GM12878 (cell line): ENCODE measurements at regions of chr17 and their contacts with region 1.

Region 1: GRCh38 chr17:78013683-78014467 is 55.4 kb downstream of the TNRC6C start:
- DNase-seq: peak; percentile 20
- ATAC-seq: peak; percentile 74
- H3K4me3 ChIP-seq: no peak overlapping the region
- H3K27ac ChIP-seq: no peak overlapping the region
- H3K4me1 ChIP-seq: no peaks in the 10 kb centered on the region
- H3K27me3 ChIP-seq: no peaks in the 10 kb centered on the region
- CTCF ChIP-seq: peak; percentile 67 to 89 (median 79)
- EP300 ChIP-seq: no peak
- POLR2A ChIP-seq: no peak
- RAD21 ChIP-seq: peak; percentile 94

Region 2: DNA sequence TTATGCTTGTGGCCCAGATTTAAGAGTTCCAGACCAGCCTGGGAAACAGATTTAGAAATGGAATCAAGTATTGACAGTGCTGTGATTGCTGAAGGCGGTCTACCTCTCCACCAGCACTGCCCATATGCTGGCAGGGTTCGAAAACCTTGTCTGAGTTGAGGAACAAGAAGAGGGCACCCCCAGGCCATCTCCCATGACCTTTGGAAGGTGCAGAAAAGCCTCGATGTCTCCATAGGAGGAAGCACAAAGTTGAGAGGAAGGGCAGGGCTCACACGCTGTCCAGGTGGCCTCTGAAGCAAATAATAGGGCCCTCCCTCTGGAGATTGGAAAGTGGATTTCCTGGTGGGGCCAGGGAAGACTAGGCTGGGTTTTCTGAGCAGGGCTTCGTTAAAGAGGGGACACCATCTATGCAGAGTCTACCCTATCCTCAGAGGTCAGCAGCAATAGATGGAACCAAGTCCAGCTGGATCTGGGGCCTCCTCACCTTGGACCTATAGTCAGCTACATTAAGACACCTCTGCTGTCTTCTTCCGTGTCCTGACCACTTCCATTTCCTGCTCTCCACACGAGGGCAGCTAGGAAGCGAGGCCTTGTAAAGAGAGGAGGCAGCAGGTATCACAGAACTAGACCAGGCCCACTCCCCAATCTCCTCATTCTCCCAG is 1355.7 kb before region 1 on chr17:
- CTCF ChIA-PET with region 1: no interaction called
- POLR2A ChIA-PET with region 1: no interaction called
- RAD21 ChIA-PET with region 1: no interaction called
- SMC1A ChIA-PET with region 1: no interaction called
- in situ Hi-C with region 1: no loop called
- intact Hi-C with region 1: no loop called
- DNase-seq: no peak
- ATAC-seq: no peak
- H3K4me3 ChIP-seq: no peak overlapping the region
- H3K27ac ChIP-seq: no peak overlapping the region
- H3K4me1 ChIP-seq: peaks cover 3% of the 10 kb centered on the region; the same call in 1 of the 2 replicates
- H3K27me3 ChIP-seq: no peaks in the 10 kb centered on the region
- CTCF ChIP-seq: no peak
- EP300 ChIP-seq: no peak
- POLR2A ChIP-seq: no peak
- RAD21 ChIP-seq: no peak

Region 3: DNA sequence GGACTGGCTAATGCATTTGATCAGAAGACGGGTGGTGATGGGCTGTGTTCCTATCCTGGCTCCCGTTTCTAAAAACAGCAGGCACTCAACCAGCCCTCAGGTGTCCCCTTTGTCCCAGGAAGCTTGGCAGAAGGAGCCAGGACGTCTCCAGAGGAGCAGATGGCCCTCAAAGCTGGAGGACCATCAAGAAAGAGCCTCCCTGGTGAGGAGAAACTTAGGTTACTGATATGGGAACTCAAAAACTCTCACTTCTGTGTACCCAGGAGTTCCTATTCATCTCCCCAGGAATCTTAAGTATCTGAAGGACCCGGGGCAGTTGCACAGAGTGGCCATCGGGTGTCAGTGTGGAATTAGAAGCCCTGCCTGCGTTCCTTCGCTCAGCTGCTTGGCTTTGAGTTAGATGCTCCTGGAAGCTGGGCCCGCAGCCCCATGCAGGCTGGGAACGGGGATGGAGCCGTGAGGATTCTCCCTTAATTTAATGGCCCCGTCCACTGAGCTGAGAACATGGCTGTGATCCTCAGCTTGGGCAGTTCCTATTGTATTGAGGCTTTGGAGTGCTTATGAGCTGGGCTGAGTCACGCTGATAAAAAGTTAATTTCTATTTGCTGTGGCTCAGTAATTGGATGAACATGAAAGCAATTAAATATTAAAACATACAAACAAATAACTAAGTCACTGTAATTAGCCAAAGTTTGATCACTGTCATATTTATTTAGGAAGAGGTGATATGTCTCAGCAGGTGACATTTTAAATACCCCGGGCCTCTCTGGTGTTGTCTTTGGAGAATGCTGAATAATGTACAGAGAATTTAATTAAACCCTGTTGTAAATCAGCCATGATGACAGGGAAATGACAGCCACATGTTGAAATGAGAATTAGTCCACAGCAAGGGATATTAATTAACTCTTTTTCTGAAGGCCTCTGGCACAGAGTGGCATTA is 471.1 kb before region 1 on chr17:
- CTCF ChIA-PET with region 1: interaction called, 58 read pairs
- POLR2A ChIA-PET with region 1: no interaction called
- RAD21 ChIA-PET with region 1: interaction called, 41 read pairs
- SMC1A ChIA-PET with region 1: interaction called, 26 read pairs
- in situ Hi-C with region 1: loop called (anchors 5 kb)
- intact Hi-C with region 1: loop called (anchors 1 kb)
- DNase-seq: peak; percentile 5
- ATAC-seq: peak; percentile 91
- H3K4me3 ChIP-seq: no peak overlapping the region
- H3K27ac ChIP-seq: no peak overlapping the region
- H3K4me1 ChIP-seq: no peaks in the 10 kb centered on the region
- H3K27me3 ChIP-seq: peaks cover 0 to 1% of the 10 kb centered on the region in 2 experiments; a peak in 2 of 4 replicates
- CTCF ChIP-seq: peak; percentile 84 to 88 (median 86)
- EP300 ChIP-seq: no peak
- POLR2A ChIP-seq: no peak
- RAD21 ChIP-seq: peak; percentile 84

Region 4: GRCh38 chr17:77563439-77564102 is 450.3 kb before region 1 on chr17:
- CTCF ChIA-PET with region 1: no interaction called
- POLR2A ChIA-PET with region 1: no interaction called
- RAD21 ChIA-PET with region 1: no interaction called
- SMC1A ChIA-PET with region 1: no interaction called
- in situ Hi-C with region 1: no loop called
- intact Hi-C with region 1: no loop called
- DNase-seq: no peak
- ATAC-seq: no peak
- H3K4me3 ChIP-seq: no peak overlapping the region
- H3K27ac ChIP-seq: no peak overlapping the region
- H3K4me1 ChIP-seq: no peaks in the 10 kb centered on the region
- H3K27me3 ChIP-seq: peaks cover 0 to 7% of the 10 kb centered on the region in 2 experiments; a peak in 2 of 4 replicates
- CTCF ChIP-seq: no peak
- EP300 ChIP-seq: no peak
- POLR2A ChIP-seq: no peak
- RAD21 ChIP-seq: no peak

Region 5: DNA sequence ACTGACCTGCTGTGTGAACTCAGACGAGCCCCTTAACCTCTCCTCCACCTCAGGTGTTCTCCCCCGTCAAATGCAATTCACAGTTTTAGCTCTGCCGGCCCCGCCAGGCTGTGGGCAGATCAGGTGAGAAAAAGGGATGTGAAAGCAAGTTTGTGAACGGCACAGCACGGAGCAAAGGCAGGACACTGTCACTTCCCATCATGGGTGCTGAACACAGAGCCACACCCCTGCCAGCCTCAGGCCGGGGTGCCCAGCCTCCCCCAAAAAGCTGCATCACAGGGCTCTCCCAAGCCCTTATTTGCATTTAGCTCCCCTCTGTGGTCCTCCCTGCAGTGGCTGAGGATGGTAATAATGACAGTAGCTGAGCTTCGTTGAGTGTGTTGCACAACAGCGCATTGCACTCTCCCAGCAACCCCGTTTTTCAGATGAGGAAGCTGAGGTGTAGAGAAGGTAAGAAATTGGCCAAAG is 144.2 kb before region 1 on chr17:
- CTCF ChIA-PET with region 1: interaction called, 12 read pairs
- POLR2A ChIA-PET with region 1: no interaction called
- RAD21 ChIA-PET with region 1: interaction called, 6 read pairs
- SMC1A ChIA-PET with region 1: interaction called, 8 read pairs
- in situ Hi-C with region 1: no loop called
- intact Hi-C with region 1: no loop called
- DNase-seq: peak; percentile 87
- ATAC-seq: peak; percentile 97
- H3K4me3 ChIP-seq: no peak overlapping the region
- H3K27ac ChIP-seq: no peak overlapping the region
- H3K4me1 ChIP-seq: peaks cover 22% of the 10 kb centered on the region
- H3K27me3 ChIP-seq: peaks cover 0 to 4% of the 10 kb centered on the region in 2 experiments; a peak in 1 of 4 replicates
- CTCF ChIP-seq: peak in 1 of 3 experiments; percentile 13; a peak in 1 of 6 replicates
- EP300 ChIP-seq: peak; percentile 86 to 91; a peak in 3 of 4 replicates
- POLR2A ChIP-seq: no peak
- RAD21 ChIP-seq: no peak

Region 6: DNA sequence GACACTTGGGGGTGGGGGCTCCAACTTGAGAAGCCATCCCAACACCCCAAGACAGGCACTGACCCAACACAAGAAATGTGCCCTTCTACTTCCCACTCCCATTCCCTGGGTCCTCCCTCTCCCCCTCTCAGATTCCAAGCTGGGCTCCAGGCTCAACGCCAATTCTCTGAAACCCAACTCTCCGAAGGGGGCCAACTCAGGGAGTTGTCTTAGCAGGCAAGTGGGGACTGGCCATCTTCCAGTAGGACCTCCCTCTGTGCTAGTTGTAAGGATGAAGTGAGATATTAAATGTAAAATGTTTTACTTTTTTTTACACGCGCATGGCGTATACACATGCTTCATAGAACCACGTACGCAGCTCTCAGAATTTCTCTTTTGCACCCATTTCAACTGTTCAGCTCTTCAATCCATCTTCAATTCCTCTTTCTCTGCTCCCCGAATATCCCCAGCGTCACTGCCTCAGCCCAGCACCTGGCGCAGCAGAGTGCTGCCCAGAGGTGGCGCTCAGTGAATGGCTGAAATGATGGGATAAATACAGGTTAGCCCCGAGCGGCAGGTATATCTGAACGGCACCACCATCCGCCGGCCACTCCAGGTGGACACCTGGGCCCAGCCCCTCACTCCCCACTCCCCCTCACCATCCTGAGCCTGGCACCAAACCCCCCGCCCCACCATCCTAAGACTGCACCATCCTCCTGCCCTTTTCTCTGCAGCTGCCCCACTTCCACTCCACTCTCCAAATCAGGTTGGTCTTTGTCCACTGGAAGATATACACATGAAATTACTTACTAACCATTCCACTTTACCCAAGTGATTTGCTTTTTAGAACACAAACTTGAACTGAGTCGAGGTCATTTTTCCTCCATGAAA is 99.3 kb before region 1 on chr17:
- CTCF ChIA-PET with region 1: interaction called, 20 read pairs
- POLR2A ChIA-PET with region 1: no interaction called
- RAD21 ChIA-PET with region 1: no interaction called
- SMC1A ChIA-PET with region 1: interaction called, 4 read pairs
- in situ Hi-C with region 1: no loop called
- intact Hi-C with region 1: no loop called
- DNase-seq: no peak
- ATAC-seq: peak; percentile 31; the same call in 1 of the 3 replicates
- H3K4me3 ChIP-seq: no peak overlapping the region
- H3K27ac ChIP-seq: no peak overlapping the region
- H3K4me1 ChIP-seq: no peaks in the 10 kb centered on the region
- H3K27me3 ChIP-seq: peaks cover 0 to 2% of the 10 kb centered on the region in 2 experiments; a peak in 2 of 4 replicates
- CTCF ChIP-seq: peak in 1 of 3 experiments; percentile 30; a peak in 1 of 6 replicates
- EP300 ChIP-seq: no peak
- POLR2A ChIP-seq: no peak
- RAD21 ChIP-seq: no peak

Region 7: DNA sequence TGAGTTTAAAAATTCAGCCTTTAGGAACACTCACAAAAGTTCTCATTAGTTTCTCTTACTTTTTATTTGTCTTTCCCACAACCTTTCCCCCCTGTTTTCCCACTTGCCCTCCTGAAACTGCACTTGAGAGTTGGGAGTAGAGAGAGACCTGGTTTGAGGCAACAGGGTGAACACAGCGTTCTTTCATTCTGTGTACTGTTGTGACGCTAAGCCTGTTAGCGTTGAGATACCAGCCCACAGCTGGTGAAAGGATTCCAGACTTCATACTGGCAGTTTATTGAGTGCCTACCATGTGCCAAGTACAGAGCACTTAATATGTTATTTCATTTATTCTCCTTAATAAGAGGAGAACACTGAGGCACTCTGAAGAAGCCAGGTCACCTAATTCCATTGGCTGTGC is 45.1 kb before region 1 on chr17:
- CTCF ChIA-PET with region 1: interaction called, 8 read pairs
- POLR2A ChIA-PET with region 1: no interaction called
- RAD21 ChIA-PET with region 1: interaction called, 5 read pairs
- SMC1A ChIA-PET with region 1: interaction called, 14 read pairs
- in situ Hi-C with region 1: no loop called
- intact Hi-C with region 1: no loop called
- DNase-seq: no peak
- ATAC-seq: no peak
- H3K4me3 ChIP-seq: no peak overlapping the region
- H3K27ac ChIP-seq: no peak overlapping the region
- H3K4me1 ChIP-seq: no peaks in the 10 kb centered on the region
- H3K27me3 ChIP-seq: no peaks in the 10 kb centered on the region
- CTCF ChIP-seq: no peak
- EP300 ChIP-seq: no peak
- POLR2A ChIP-seq: no peak
- RAD21 ChIP-seq: no peak

Region 8: GRCh38 chr17:78040440-78041385 is 26.8 kb after region 1 on chr17:
- CTCF ChIA-PET with region 1: interaction called, 80 read pairs
- POLR2A ChIA-PET with region 1: no interaction called
- RAD21 ChIA-PET with region 1: interaction called, 61 read pairs
- SMC1A ChIA-PET with region 1: interaction called, 79 read pairs
- in situ Hi-C with region 1: no loop called
- intact Hi-C with region 1: no loop called
- DNase-seq: peak; percentile 21
- ATAC-seq: peak; percentile 99
- H3K4me3 ChIP-seq: peak overlapping the region; percentile 57; the same call in 1 of the 2 replicates
- H3K27ac ChIP-seq: peak overlapping the region; percentile 34; the same call in 1 of the 2 replicates
- H3K4me1 ChIP-seq: no peaks in the 10 kb centered on the region
- H3K27me3 ChIP-seq: no peaks in the 10 kb centered on the region
- CTCF ChIP-seq: peak in 1 of 3 experiments; percentile 25; a peak in 2 of 6 replicates
- EP300 ChIP-seq: no peak
- POLR2A ChIP-seq: no peak
- RAD21 ChIP-seq: no peak